Activated T-helper 2 cell treated with anti-CD3 and anti-CD28 coated beads, Interferon-gamma antibody, Interleukin-2, Interleukin-4, amounts not matched to agents 10 μg/mL and 5 μg/mL and 100 μg/mL, durations not matched to agents 14 hours and 24 hours and 36 hours (primary cell): ENCODE measurements at regions of chr6 and their contacts with region 1.

Region 1: GRCh38 chr6:34248727-34249551 is at the start of gene SMIM29:
- DNase-seq: peak; percentile 97
- H3K4me3 Mint-ChIP-seq: peak within 1 kb of the TSS; percentile 82
- H3K27ac Mint-ChIP-seq: peak within 1 kb of the TSS; percentile 77
- H3K4me1 Mint-ChIP-seq: peaks cover 30% of the 10 kb centered on the region
- H3K27me3 Mint-ChIP-seq: peaks cover 5% of the 10 kb centered on the region
- total RNA-seq, gene SMIM29: 16.6 and 17.3 TPM in 2 replicates

Region 2: DNA sequence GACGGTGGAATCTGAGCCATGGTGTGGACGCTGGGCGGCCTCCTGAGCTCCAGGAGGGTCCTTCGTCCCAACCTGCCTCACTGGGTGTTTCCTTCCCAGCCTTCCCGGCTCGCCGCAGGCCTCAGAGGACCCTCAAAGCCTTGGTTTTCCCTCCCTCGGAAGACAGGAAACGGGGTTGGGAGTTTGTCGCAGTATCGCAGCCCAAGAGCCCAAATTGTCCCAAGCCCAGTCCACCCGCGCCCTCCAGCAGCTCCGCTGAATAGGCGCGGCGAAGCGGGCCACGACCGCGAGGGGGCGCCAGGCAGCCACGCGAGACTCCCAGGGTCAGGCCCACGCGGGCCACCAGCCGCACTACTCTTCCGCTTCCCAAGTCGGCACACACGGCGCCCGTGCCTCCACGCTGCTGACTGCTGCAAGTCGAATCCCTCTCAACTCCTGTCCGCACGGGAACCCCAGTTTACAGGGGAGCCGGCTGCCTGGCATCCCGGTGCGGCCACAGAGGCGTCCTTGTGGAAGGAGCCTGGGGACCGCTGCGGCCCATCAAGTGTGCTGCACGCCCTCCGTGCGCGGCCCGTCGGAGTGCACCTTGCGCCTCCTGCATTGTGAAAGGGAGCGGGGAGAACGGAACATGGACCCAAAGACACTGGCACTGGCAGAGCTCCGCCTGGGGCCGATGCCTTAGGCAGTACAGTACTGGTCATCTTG is 52.7 kb before region 1 on chr6:
- intact Hi-C with region 1: loop called (anchors 2 kb)
- DNase-seq: peak; percentile 77
- H3K4me3 Mint-ChIP-seq: peak overlapping the region; percentile 79
- H3K27ac Mint-ChIP-seq: no peak overlapping the region
- H3K4me1 Mint-ChIP-seq: peaks cover 6% of the 10 kb centered on the region
- H3K27me3 Mint-ChIP-seq: peaks cover 13% of the 10 kb centered on the region

Region 3: GRCh38 chr6:34236131-34236996 is 12.6 kb before region 1 on chr6 and contains the start of gene HMGA1:
- intact Hi-C with region 1: loop called (anchors 1 kb)
- DNase-seq: peak; percentile 83
- H3K4me3 Mint-ChIP-seq: peak within 1 kb of the TSS; percentile 86
- H3K27ac Mint-ChIP-seq: peak within 1 kb of the TSS; percentile 94
- H3K4me1 Mint-ChIP-seq: peaks cover 35% of the 10 kb centered on the region
- H3K27me3 Mint-ChIP-seq: no peaks in the 10 kb centered on the region
- total RNA-seq, gene HMGA1: 412 and 422 TPM in 2 replicates

Region 4: GRCh38 chr6:34414999-34415858 is 166.3 kb after region 1 on chr6:
- intact Hi-C with region 1: loop called (anchors 5 kb)
- DNase-seq: peak; percentile 20
- H3K4me3 Mint-ChIP-seq: no peak overlapping the region
- H3K27ac Mint-ChIP-seq: peak overlapping the region; percentile 33
- H3K4me1 Mint-ChIP-seq: peaks cover 14% of the 10 kb centered on the region
- H3K27me3 Mint-ChIP-seq: no peaks in the 10 kb centered on the region

Region 5: DNA sequence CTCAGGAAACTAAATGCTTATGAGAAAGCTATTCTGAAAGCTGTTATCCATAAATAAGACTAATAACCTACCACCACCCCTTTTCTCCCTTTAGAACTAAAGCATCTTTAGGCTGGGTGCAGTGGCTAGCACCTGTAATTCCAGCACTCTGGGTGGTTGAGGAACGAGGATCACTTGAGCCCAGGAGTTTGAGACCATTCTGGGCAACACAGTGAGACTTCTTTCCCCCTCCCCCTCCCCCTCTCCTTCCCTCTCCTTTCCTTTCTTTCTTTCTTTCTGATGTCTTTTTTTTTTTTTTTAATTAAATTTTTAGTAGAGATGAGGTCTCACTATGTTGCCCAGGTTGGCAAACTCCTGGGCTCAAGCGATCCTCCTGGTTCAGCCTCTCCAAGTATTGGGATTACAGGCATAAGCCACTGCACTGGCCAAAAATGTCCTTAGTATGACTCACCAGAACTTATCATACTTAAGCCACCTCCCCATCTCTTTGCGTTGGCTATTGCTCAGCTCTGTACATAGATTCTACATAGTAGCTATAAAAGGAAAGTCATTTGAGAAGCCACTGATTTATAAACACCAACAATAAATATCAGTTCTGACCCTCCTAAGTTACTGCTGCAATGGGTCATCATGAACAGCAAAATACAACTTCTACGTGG is 362.0 kb after region 1 on chr6:
- intact Hi-C with region 1: loop called (anchors 5 kb)
- DNase-seq: no peak
- H3K4me3 Mint-ChIP-seq: no peak overlapping the region
- H3K27ac Mint-ChIP-seq: no peak overlapping the region
- H3K4me1 Mint-ChIP-seq: peaks cover 24% of the 10 kb centered on the region
- H3K27me3 Mint-ChIP-seq: no peaks in the 10 kb centered on the region